Activated CD4-positive, alpha-beta memory T cell treated with anti-CD3 and anti-CD28 coated beads for 36 hours (primary cell): ENCODE measurements at regions of chr10 and their contacts with region 1.

Region 1: DNA sequence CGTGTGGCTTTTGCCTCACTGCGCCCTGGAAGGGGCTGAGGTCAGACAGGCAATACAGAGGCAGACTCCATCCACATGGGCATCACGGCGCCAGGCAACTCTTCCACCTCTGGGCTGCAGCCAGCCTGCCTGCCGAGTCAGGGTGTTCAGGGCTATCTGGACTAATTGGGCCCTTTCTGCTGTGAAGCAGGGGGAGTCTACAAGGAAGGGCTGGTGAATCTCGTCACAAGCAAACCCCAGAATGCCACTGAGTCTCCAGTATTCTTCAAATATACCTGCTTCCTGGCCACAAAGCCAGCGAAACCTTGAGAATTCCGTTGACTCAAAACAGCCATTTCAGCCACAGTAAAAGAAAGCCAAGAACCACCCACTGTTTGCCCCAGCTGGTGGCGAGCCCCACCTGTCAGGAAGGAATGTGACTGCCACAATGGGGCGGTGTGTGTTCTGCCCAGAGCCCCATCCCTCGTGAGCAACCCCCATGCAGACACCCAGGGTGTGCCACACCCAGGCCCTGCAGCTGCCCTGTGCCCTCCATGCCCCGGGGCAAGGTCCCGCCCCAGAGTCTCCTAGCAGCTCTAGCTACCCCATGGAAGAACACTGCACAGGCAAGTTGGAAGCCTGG is 117.3 kb downstream of the FAM53B start:
- DNase-seq: peak; percentile 80
- H3K4me3 Mint-ChIP-seq: no peak overlapping the region
- H3K27ac Mint-ChIP-seq: no peak overlapping the region
- H3K4me1 Mint-ChIP-seq: peaks cover 51% of the 10 kb centered on the region
- H3K27me3 Mint-ChIP-seq: no peaks in the 10 kb centered on the region

Region 2: GRCh38 chr10:124539935-124540641 is 86.8 kb before region 1 on chr10:
- CTCF ChIA-PET with region 1: interaction called, 3 read pairs
- POLR2A ChIA-PET with region 1: no interaction called
- intact Hi-C with region 1: loop called (anchors 2 kb)
- DNase-seq: peak; percentile 76
- H3K4me3 Mint-ChIP-seq: no peak overlapping the region
- H3K27ac Mint-ChIP-seq: no peak overlapping the region
- H3K4me1 Mint-ChIP-seq: peaks cover 3% of the 10 kb centered on the region
- H3K27me3 Mint-ChIP-seq: no peaks in the 10 kb centered on the region

Region 3: GRCh38 chr10:124550293-124551034 is 76.4 kb before region 1 on chr10:
- CTCF ChIA-PET with region 1: no interaction called
- POLR2A ChIA-PET with region 1: no interaction called
- intact Hi-C with region 1: no loop called
- DNase-seq: no peak
- H3K4me3 Mint-ChIP-seq: no peak overlapping the region
- H3K27ac Mint-ChIP-seq: no peak overlapping the region
- H3K4me1 Mint-ChIP-seq: peaks cover 3% of the 10 kb centered on the region
- H3K27me3 Mint-ChIP-seq: no peaks in the 10 kb centered on the region

Region 4: GRCh38 chr10:124588736-124589490 is 38.0 kb before region 1 on chr10:
- CTCF ChIA-PET with region 1: no interaction called
- POLR2A ChIA-PET with region 1: no interaction called
- intact Hi-C with region 1: no loop called
- DNase-seq: no peak
- H3K4me3 Mint-ChIP-seq: no peak overlapping the region
- H3K27ac Mint-ChIP-seq: no peak overlapping the region
- H3K4me1 Mint-ChIP-seq: no peaks in the 10 kb centered on the region
- H3K27me3 Mint-ChIP-seq: no peaks in the 10 kb centered on the region

Region 5: GRCh38 chr10:124612611-124613498 is 14.0 kb before region 1 on chr10:
- CTCF ChIA-PET with region 1: interaction called, 8 read pairs
- POLR2A ChIA-PET with region 1: no interaction called
- intact Hi-C with region 1: loop called (anchors 1 kb)
- DNase-seq: peak; percentile 39
- H3K4me3 Mint-ChIP-seq: no peak overlapping the region
- H3K27ac Mint-ChIP-seq: no peak overlapping the region
- H3K4me1 Mint-ChIP-seq: peaks cover 34% of the 10 kb centered on the region
- H3K27me3 Mint-ChIP-seq: no peaks in the 10 kb centered on the region

Region 6: GRCh38 chr10:124849111-124849773 is 222.4 kb after region 1 on chr10:
- CTCF ChIA-PET with region 1: no interaction called
- POLR2A ChIA-PET with region 1: no interaction called
- intact Hi-C with region 1: no loop called
- DNase-seq: no peak
- H3K4me3 Mint-ChIP-seq: no peak overlapping the region
- H3K27ac Mint-ChIP-seq: no peak overlapping the region
- H3K4me1 Mint-ChIP-seq: no peaks in the 10 kb centered on the region
- H3K27me3 Mint-ChIP-seq: peaks cover 3% of the 10 kb centered on the region